ENCODE measurements at regions of chr7 and their contacts with region 1.

Region 1: DNA sequence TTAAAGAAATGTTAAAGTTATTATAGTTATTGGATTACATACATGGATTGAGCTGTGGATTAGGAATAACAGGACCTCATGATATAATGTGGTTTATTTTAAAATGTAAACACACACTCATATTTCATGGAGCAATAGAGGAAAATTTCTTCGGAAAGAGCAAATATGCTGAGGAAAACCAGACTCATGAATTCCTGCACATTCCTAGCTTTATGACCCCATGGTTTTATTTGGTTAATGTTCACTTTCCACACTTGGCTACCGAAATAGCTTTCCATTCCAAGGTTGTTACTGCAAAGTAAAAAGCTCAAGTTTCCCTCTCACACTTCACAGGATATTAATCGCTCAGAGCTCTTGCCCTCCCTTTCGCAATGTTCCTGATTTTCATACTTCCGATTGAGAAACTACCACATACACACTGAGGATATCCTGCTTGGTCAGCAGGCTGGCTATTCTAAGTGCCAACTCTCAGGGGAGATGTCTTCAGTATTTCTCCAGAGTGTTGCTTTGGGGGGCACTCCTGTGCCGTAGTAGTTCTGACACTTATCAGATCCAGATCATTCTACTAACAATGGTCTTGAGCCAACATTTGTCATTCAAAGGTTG is 77.5 kb upstream of the STEAP1B start:
- DNase-seq: peak; percentile 87
- H3K4me3 ChIP-seq: no peak overlapping the region
- H3K27ac ChIP-seq: peak overlapping the region; percentile 73
- H3K4me1 ChIP-seq: peaks cover 35% of the 10 kb centered on the region
- H3K27me3 ChIP-seq: no peaks in the 10 kb centered on the region
- CTCF ChIP-seq: no peak

Region 2: GRCh38 chr7:22565315-22565811 is 12.1 kb before region 1 on chr7:
- CTCF ChIA-PET with region 1: no interaction called
- dilution Hi-C with region 1: no loop called
- in situ Hi-C with region 1: no loop called
- intact Hi-C with region 1: loop called (anchors 1 kb)
- DNase-seq: peak; percentile 92
- H3K4me3 ChIP-seq: no peak overlapping the region
- H3K27ac ChIP-seq: peak overlapping the region; percentile 81
- H3K4me1 ChIP-seq: peaks cover 61% of the 10 kb centered on the region
- H3K27me3 ChIP-seq: no peaks in the 10 kb centered on the region
- CTCF ChIP-seq: no peak